AG04449 (cell line): ENCODE measurements at regions of chr7 and their contacts with region 1.

Region 1: DNA sequence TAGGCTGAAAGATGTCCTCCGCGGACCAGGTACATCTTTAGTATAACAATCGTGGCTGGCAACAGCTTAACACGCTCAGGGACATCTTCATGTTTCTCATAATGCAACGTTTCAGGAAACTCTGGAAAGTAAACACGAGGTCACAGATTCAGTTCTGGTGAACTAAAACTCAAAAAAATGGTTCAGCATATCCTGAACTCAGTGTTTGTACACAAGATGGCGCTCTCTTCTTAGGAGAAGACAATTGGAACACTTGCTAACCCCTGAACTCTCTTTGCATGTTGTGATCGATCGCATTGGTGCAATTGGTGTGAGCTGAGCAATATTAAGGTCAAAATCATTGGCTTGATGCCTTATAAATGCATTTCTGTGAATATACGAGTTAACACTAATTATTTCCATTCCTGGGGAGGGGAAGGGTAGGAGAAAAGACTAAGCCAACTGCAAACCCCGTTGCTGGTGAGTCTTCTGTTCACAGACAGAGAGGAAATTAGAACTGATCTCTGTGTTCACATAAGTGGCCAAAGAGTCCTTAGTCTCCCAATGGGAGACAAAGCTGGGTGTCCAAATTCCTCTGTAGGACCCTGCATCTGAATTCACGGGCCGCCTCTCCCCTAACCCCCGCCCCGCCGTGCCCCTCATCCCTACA is 52.6 kb upstream of the FAM180A start:
- DNase-seq: peak; percentile 5
- H3K4me3 ChIP-seq: no peak overlapping the region
- CTCF ChIP-seq: peak; percentile 68

Region 2: DNA sequence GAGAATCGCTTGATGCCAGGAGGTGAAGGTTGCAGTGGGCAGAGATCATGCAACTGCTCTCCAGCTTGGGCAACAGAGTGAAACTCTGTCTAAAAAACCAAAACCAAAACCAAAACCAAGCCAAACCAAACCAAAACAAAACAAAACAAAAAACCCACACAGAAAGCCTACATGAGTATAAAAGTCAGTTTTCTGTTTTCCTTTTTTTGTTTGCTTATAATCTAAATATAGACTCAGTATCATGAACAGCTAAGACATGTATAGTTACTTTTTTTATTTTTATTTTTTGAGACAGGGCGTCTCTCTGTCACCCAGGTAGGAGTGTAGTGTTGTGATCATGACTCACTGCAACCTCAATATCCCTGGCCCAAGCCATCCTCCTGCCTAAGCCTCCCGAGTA is 192.8 kb after region 1 on chr7:
- CTCF ChIA-PET with region 1: interaction called, 22 read pairs
- POLR2A ChIA-PET with region 1: no interaction called
- DNase-seq: no peak
- H3K4me3 ChIP-seq: no peak overlapping the region
- CTCF ChIP-seq: no peak

Region 3: DNA sequence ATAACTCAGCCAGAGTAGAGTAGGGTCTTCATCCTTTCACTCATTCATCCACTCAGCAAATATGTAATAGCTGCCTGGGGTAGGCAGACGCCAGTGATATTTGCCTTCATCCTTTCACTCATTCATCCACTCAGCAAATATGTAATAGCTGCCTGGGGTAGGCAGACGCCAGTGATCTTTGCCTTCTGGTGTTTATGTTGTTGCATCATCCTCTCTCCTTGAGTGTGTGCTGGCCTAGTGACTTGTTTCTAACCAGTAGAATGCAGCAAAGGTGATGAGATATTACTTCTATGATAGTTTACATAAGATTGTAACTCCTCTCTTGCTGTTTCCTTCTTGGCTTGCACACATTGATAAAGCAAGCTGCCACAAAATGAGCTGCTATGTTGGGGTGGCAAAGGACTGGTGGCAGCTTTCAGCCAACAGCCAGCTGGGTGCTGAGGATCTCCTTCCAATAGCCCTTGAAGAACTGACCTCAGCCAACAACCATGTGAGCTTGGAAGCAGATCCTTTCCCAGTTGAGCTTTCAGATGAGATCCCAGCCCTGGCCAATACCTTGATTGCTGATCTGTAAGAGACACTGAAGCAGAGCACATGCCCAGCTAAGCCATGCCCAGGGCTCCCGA is 199.2 kb after region 1 on chr7:
- CTCF ChIA-PET with region 1: interaction called, 266 read pairs
- POLR2A ChIA-PET with region 1: no interaction called
- DNase-seq: no peak
- H3K4me3 ChIP-seq: no peak overlapping the region
- CTCF ChIP-seq: no peak